ACHN (cell line): ENCODE measurements at regions of chr1 and their contacts with region 1.

Region 1: GRCh38 chr1:218499011-218499691 is 154.0 kb downstream of the TGFB2 start:
- DNase-seq: peak; percentile 78

Region 2: GRCh38 chr1:218304281-218305039 is 194.7 kb before region 1 on chr1:
- in situ Hi-C with region 1: no loop called
- DNase-seq: peak; percentile 49

Region 3: GRCh38 chr1:218600976-218601375 is 101.8 kb after region 1 on chr1:
- in situ Hi-C with region 1: no loop called
- DNase-seq: peak; percentile 12

Region 4: DNA sequence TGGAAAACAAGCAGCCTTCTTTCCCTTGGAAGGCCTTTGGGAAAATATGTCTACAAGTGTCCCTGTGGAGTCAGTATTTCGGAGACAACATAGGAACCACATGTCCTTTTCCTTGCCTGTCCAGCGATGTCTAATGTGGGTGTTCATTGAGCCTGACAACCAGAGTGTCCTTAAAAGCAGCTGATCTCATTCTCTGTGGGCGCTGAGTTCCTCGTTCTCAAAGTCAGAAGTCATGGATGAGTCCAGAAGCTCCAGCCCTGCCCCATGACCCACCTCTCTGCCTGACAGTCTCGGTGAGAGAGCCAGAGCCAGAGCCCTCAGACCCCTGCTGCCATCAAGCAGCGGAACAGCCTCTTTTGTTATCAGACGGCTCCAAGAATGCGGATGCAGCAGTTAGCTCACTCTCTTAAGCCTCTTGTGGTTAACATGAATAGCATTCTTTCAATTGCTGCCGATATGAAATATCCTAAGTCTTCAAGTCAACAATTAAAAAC is 175.2 kb after region 1 on chr1:
- in situ Hi-C with region 1: loop called (anchors 25 kb)
- DNase-seq: peak; percentile 98

Region 5: DNA sequence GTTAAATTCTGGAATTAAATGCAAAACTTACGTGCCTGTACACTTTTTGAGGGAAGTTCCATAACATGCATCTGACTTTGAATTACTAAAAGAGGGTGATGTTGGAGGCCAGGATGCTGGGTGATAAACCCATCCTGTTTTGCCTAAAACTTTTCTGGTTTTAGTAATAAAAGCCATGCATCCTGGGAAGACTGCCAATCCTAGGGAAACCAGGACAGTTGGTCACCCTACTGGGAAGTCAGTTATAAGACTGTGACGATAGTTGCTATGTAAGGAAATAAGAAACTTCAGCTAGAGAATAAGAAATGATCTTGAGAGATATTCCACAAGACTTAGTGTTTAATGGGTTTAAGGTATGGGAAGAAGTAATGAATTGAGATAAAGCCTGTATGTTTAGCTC is 337.9 kb after region 1 on chr1:
- in situ Hi-C with region 1: no loop called
- DNase-seq: no peak